ENCODE measurements at regions of chr1 and their contacts with region 1.

Region 1: DNA sequence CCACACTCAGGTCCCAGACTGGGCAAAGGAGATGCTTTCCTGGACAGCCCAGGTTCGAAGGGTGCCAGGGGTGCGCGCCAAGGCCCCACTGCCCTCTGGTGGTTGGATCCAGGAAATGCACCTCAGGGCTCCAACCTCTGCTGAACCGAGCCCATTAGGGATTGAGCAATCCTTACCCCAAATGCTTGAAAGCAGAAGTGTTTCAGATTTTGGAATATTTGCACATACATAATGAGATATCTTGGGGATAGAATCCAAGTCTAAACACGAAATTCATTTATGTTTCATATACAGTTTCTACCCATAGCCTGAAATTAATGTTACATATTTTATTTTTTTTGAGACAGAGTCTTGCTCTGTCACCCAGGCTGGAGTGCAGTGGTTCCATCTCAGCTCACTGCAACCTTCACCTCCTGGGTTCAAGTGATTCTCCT is 57.4 kb downstream of the SLC9A1 start:
- DNase-seq: peak; percentile 86
- ATAC-seq: peak; percentile 75 to 86
- H3K4me3 ChIP-seq: no peak overlapping the region
- H3K27ac ChIP-seq: peak overlapping the region; percentile 79
- H3K4me1 ChIP-seq: peaks cover 39% of the 10 kb centered on the region
- H3K27me3 ChIP-seq: no peaks in the 10 kb centered on the region
- CTCF ChIP-seq: peak; percentile 98

Region 2: DNA sequence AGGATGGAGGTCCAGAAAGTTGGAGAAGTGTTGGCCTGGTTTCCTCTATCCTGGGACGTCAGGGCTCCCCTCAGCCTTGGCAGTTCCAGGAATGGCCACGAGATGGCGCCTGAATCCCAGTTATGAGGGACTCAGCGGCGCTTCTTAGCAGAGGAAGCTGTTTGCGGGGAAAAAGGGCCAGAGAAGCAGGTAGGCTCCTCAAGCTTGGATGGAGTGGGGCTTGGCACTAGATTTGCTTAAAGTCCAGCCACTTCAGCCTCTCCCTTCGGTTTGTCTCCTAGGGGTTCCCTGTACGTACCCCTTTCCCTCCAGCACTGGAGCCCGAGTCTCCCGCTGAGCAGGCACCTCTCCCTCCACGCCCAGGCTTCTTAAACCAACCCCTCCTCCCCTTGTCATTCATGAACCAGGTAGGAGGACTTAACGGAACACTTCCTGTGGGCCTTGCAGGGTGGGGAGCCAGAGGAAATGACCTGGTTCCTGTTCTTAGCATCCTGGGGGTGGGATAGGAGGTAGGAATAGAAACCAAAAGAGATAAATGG is 52.8 kb before region 1 on chr1:
- intact Hi-C with region 1: loop called (anchors 10 kb)
- DNase-seq: peak; percentile 88
- ATAC-seq: peak; percentile 94 to 96
- H3K4me3 ChIP-seq: peak overlapping the region; percentile 19
- H3K27ac ChIP-seq: peak overlapping the region; percentile 13
- H3K4me1 ChIP-seq: peaks cover 19% of the 10 kb centered on the region
- H3K27me3 ChIP-seq: no peaks in the 10 kb centered on the region
- CTCF ChIP-seq: peak; percentile 99

Measured in lower lobe of right lung (tissue), 2 donors.